HEK293T (cell line): ENCODE measurements at regions of chr3 and their contacts with region 1.

Region 1: DNA sequence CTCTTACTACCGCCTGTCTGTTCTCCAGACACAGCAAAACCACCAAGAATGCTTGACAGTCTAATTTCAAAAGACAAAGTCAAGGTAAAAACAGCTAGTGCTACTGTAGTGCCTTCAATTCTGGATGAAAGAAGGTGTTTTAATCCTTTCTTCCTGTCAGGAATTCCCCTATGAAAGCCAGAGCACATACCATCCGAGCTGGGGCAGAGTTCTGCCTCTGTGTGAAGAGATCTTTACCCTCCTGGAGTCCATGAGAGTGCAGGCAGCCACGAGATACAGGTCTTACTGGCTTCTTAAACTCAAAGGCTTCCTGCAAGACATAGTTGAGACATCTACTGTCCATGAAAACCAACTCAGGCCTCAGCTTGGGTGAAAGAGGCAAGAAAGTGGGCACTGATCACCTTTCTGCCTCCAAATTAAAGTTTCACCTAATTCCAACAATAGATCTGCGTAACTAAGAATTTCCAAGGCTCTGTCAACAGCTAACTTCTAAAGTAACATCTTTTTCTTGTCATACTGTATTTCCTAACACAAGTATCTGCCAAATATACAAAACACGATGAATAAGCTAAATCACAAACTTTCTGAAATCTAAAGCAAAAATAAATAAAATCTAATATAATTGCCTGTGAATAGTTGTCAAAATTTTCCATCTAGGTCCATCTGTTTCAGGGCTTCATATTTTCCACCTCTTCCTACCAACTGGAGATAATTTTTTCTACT is 7.5 kb downstream of the CDC25A start:
- DNase-seq: no peak

Region 2: DNA sequence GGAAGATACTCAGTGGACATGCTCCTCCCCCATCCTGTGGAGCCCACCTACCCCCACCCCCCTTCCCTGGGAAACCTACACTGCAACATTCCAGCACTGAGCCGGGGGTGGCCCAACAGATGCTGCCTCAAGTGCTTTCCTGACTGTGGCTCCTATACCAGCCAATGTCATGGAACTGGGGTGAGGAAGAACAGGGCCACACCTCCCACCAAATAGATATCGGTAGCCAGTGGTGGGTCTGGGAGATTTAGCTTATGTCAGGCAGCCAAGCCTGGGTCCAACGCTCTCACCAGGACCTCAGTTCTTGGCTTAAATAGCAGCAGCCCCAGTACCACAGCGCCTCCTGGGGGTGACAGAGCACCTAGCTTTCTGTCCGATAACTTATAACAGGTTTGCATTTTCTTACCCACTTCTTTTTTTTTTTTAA is 22.7 kb before region 1 on chr3:
- CTCF ChIA-PET with region 1: interaction called, 10 read pairs
- POLR2A ChIA-PET with region 1: no interaction called
- DNase-seq: peak; percentile 72

Region 3: GRCh38 chr3:48208076-48208475 is 27.4 kb after region 1 on chr3:
- CTCF ChIA-PET with region 1: no interaction called
- POLR2A ChIA-PET with region 1: no interaction called
- DNase-seq: no peak